CD8-positive, alpha-beta T cell (primary cell): ENCODE measurements at regions of chr1 and their contacts with region 1.

Region 1: GRCh38 chr1:207404849-207405525 is 49.1 kb upstream of the CR2 start:
- DNase-seq: peak in 2 of 9 experiments; percentile 68 to 79
- ATAC-seq: peak; percentile 71
- H3K4me3 ChIP-seq: no peak overlapping the region
- H3K4me3 Mint-ChIP-seq: no peak overlapping the region
- H3K27ac ChIP-seq: no peak overlapping the region
- H3K27ac Mint-ChIP-seq: no peak overlapping the region
- H3K4me1 ChIP-seq: no peaks in the 10 kb centered on the region
- H3K4me1 Mint-ChIP-seq: peaks cover 3% of the 10 kb centered on the region
- H3K27me3 ChIP-seq: no peaks in the 10 kb centered on the region
- H3K27me3 Mint-ChIP-seq: peaks cover 5% of the 10 kb centered on the region
- CTCF ChIP-seq: peak; percentile 91

Region 2: GRCh38 chr1:207007352-207008033 is 397.5 kb before region 1 on chr1:
- CTCF ChIA-PET with region 1: no interaction called
- POLR2A ChIA-PET with region 1: no interaction called
- intact Hi-C with region 1: no loop called
- DNase-seq: no peak
- ATAC-seq: no peak
- H3K4me3 ChIP-seq: no peak overlapping the region
- H3K4me3 Mint-ChIP-seq: no peak overlapping the region
- H3K27ac ChIP-seq: no peak overlapping the region
- H3K27ac Mint-ChIP-seq: no peak overlapping the region
- H3K4me1 ChIP-seq: no peaks in the 10 kb centered on the region
- H3K4me1 Mint-ChIP-seq: peaks cover 2% of the 10 kb centered on the region
- H3K27me3 ChIP-seq: no peaks in the 10 kb centered on the region
- H3K27me3 Mint-ChIP-seq: peaks cover 5% of the 10 kb centered on the region
- CTCF ChIP-seq: no peak

Region 3: DNA sequence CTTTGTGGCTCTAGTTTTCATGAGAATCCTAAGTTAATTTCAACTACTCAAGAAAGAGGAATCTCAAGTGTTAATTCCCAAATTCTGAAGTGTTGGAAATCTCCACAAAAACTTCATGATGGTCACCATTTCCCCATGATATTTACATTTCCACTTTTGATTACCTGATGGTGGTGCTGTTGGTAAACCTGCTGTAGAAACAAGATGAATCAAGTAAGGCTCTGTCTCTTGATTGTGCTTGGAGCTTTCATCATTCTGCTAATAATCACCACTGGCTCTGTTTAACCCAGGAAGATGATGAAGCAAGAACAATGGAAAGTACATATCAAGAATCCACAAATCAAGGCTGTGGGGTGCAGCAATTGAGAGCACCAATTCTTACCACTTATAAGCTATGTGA is 223.1 kb before region 1 on chr1:
- CTCF ChIA-PET with region 1: interaction called, 23 read pairs
- POLR2A ChIA-PET with region 1: interaction called, 3 read pairs
- intact Hi-C with region 1: loop called (anchors 1 kb)
- DNase-seq: peak in 2 of 9 experiments; percentile 24 to 46
- ATAC-seq: no peak
- H3K4me3 ChIP-seq: no peak overlapping the region
- H3K4me3 Mint-ChIP-seq: no peak overlapping the region
- H3K27ac ChIP-seq: no peak overlapping the region
- H3K27ac Mint-ChIP-seq: no peak overlapping the region
- H3K4me1 ChIP-seq: no peaks in the 10 kb centered on the region
- H3K4me1 Mint-ChIP-seq: no peaks in the 10 kb centered on the region
- H3K27me3 ChIP-seq: no peaks in the 10 kb centered on the region
- H3K27me3 Mint-ChIP-seq: peaks cover 4% of the 10 kb centered on the region
- CTCF ChIP-seq: no peak

Region 4: GRCh38 chr1:207259391-207259790 is 145.6 kb before region 1 on chr1:
- CTCF ChIA-PET with region 1: no interaction called
- POLR2A ChIA-PET with region 1: no interaction called
- intact Hi-C with region 1: loop called in 1 of 2 experiments (anchors 10 kb)
- DNase-seq: no peak
- ATAC-seq: no peak
- H3K4me3 ChIP-seq: no peak overlapping the region
- H3K4me3 Mint-ChIP-seq: no peak overlapping the region
- H3K27ac ChIP-seq: no peak overlapping the region
- H3K27ac Mint-ChIP-seq: no peak overlapping the region
- H3K4me1 ChIP-seq: no peaks in the 10 kb centered on the region
- H3K4me1 Mint-ChIP-seq: no peaks in the 10 kb centered on the region
- H3K27me3 ChIP-seq: no peaks in the 10 kb centered on the region
- H3K27me3 Mint-ChIP-seq: no peaks in the 10 kb centered on the region
- CTCF ChIP-seq: no peak